Psoas muscle (tissue), 8 donors: ENCODE measurements at regions of chr6 and their contacts with region 1.

Region 1: GRCh38 chr6:116531675-116532570 is 13.6 kb downstream of the TRAPPC3L start:
- DNase-seq: peak in 1 of 2 donors; percentile 31
- ATAC-seq: peak; percentile 79 to 91 (median 90)
- H3K4me3 ChIP-seq: no peak overlapping the region
- H3K27ac ChIP-seq: no peak overlapping the region
- H3K4me1 ChIP-seq: peaks cover 3% of the 10 kb centered on the region
- H3K27me3 ChIP-seq: no peaks in the 10 kb centered on the region
- CTCF ChIP-seq: peak; percentile 85

Region 2: DNA sequence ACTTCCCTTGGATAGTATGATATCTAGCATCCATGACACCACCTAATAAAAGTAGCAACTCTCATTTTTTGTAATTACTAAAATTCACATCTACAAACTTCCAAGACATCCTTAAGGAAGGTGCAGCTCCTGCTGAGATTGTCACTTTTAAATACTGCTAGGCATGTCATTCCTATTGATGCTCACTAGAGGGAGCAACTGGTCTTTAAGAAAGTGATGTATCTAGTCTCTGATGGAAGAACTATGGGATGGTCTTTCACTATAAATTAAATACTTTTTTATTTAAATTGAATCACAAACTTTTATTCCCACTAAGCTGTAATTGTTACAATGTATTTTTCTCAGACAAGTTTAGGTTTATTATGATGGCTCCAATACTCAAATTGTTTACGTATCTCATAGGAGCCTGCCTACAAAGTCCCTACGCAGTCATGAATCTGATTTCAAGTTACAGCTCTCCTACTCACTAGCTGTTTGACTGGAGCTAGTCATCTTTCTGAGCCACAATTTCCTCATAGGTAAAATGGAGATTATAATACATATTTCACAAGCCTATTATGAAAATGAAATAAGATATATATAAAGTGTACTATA is 244.1 kb before region 1 on chr6:
- intact Hi-C with region 1: loop called (anchors 5 kb)
- DNase-seq: no peak
- ATAC-seq: peak; percentile 65 to 87 (median 74)
- H3K4me3 ChIP-seq: no peak overlapping the region
- H3K27ac ChIP-seq: no peak overlapping the region
- H3K4me1 ChIP-seq: peaks cover 2% of the 10 kb centered on the region
- H3K27me3 ChIP-seq: no peaks in the 10 kb centered on the region
- CTCF ChIP-seq: peak; percentile 92

Region 3: DNA sequence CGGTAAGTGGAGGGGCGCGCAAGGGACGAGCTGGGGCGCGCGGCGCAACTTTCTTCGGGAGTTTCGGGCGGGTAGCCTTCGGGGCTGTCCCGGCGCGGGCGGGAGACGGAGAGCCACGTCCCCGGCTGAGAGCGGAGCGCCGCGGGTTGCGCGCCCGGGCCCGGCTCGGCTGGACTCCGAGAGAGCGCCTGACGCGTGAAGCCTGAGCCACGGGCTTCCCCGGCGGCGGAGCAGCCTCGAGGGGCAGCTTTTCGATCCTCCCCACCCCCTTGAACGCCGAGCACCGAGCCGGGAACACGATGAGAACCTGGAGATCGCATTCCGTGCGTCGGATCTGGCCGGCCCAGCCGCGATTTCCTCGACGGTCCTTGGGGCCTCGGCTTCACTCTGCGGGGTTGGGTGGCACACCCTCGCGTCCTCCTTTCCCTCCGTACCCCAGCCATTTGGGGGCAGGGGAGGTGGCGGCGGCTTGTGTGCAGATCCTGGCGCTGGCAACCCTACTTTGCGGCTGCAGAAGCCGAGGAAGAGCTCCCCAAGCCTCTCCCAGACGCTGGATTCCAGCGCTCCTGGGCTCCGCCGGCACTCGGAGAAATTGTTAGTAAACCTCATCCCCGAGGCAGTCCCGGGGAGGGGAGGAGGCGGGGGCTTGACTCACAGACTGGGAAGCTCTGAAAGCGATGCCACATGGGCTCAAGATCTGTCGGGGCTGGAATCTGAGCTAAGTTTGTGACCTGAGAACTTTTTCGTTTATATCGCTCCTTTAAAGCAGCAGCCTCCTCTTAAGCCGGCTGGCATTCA is 160.6 kb before region 1 on chr6:
- intact Hi-C with region 1: loop called in 1 of 2 experiments (anchors 10 kb)
- DNase-seq: peak; percentile 85 to 91
- ATAC-seq: peak; percentile 87 to 91 (median 88)
- H3K4me3 ChIP-seq: peak overlapping the region; percentile 97
- H3K27ac ChIP-seq: peak overlapping the region; percentile 95
- H3K4me1 ChIP-seq: peaks cover 9% of the 10 kb centered on the region
- H3K27me3 ChIP-seq: no peaks in the 10 kb centered on the region
- CTCF ChIP-seq: no peak

Region 4: DNA sequence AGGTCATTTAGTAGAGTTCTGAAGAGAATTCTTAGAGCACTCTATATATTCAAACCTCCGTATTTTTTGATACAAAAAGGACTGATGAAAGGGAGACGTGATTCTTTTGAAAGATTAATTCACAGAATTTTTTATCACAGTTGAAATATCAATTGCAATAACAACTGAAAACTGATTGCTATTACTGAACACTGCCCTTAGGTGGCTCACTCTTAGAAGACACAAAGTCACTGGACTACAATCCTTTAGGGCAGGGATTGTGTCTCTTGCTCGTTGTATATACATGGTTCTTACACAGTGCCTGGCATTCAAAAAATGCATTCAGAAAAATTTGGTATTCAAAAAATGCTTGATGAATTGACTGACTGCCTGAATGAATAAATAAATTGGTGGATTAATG is 87.8 kb before region 1 on chr6:
- intact Hi-C with region 1: loop called in 1 of 2 experiments (anchors 5 kb)
- DNase-seq: no peak
- ATAC-seq: peak in 1 of 4 donors; percentile 74
- H3K4me3 ChIP-seq: no peak overlapping the region
- H3K27ac ChIP-seq: no peak overlapping the region
- H3K4me1 ChIP-seq: no peaks in the 10 kb centered on the region
- H3K27me3 ChIP-seq: no peaks in the 10 kb centered on the region
- CTCF ChIP-seq: peak; percentile 45

Region 5: GRCh38 chr6:116561377-116562018 is 29.6 kb after region 1 on chr6:
- intact Hi-C with region 1: loop called in 1 of 2 experiments (anchors 2 kb)
- DNase-seq: peak; percentile 67 to 80
- ATAC-seq: peak; percentile 40 to 80 (median 65)
- H3K4me3 ChIP-seq: peak overlapping the region; percentile 53
- H3K27ac ChIP-seq: no peak overlapping the region
- H3K4me1 ChIP-seq: peaks cover 9% of the 10 kb centered on the region
- H3K27me3 ChIP-seq: no peaks in the 10 kb centered on the region
- CTCF ChIP-seq: peak; percentile 96

Region 6: DNA sequence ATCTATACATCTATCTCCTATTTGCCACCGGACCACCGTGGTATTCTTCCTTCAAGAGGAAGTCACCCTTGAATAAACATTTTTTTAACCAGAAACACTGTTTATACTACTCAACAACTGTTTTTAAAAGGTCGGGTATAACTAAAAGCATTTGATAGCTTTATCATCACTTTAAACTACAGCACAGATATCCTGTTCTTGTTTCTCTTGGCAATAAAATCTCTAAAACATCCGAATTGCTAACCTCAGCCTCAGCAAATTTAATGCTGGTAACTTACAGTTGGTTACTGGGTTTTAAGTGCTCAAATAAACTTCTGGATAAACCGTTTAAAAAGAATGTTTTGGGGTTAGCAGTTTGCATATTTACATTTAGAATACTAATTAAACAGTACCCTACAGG is 116.2 kb after region 1 on chr6:
- intact Hi-C with region 1: loop called in 1 of 2 experiments (anchors 5 kb)
- DNase-seq: no peak
- ATAC-seq: no peak
- H3K4me3 ChIP-seq: no peak overlapping the region
- H3K27ac ChIP-seq: no peak overlapping the region
- H3K4me1 ChIP-seq: no peaks in the 10 kb centered on the region
- H3K27me3 ChIP-seq: no peaks in the 10 kb centered on the region
- CTCF ChIP-seq: no peak